ENCODE measurements at regions of chr3 and their contacts with region 1.

Region 1: GRCh38 chr3:62188681-62189383 is 184.5 kb downstream of the FEZF2 start:
- DNase-seq: peak; percentile 40
- H3K4me3 Mint-ChIP-seq: no peak overlapping the region
- H3K27ac Mint-ChIP-seq: no peak overlapping the region
- H3K4me1 Mint-ChIP-seq: peaks cover 8% of the 10 kb centered on the region
- H3K27me3 Mint-ChIP-seq: no peaks in the 10 kb centered on the region

Region 2: DNA sequence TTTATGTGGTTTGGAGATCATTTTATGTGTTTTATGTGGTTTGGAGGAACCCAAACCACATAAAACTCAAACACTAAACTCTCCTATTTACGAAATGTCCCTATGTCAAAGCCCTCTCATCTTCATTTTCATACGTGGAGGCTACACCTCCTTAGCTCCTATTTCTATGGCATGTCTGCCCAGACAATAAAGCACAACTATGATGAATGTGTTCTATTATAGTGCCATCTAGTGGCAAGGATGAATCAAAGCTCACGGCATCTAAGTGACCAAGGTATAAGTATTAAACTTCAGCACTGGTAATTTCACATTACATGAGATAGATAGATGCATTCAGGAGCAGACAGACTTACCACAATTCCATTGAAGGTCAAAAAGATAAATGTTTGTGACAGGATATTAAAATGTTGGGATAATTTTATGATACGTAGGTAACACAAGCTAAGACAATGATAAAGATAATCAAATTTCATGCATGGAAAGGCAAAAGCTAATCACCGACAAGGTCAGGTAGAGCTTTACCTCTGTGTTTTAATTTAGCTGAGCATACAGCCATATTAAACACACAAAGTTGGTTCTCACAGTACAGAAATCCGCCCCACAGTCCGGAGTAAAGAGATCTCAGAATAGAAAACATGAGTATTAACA is 807.0 kb before region 1 on chr3:
- intact Hi-C with region 1: loop called (anchors 10 kb)
- DNase-seq: no peak
- H3K4me3 Mint-ChIP-seq: no peak overlapping the region
- H3K27ac Mint-ChIP-seq: no peak overlapping the region
- H3K4me1 Mint-ChIP-seq: peaks cover 5% of the 10 kb centered on the region
- H3K27me3 Mint-ChIP-seq: peaks cover 4% of the 10 kb centered on the region

Region 3: DNA sequence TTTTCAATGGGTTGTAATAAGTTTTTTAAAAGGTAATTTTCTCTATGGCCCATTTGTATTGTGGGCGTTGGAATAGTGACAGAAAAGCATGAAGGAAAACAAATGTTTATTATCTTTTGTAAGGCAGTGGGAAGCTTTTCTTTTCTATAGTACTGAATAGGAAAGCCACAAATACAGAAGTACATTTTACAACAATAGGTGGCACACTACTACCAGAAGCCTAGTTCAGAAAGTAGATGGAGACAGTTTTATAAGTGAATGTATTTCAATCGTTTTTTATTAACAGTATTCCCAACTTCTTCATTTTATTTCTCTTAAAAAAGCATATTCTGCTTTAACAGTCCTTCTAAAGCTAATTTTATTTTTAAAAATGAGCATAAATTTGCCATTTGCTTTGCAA is 330.8 kb before region 1 on chr3:
- intact Hi-C with region 1: loop called (anchors 2 kb)
- DNase-seq: no peak
- H3K4me3 Mint-ChIP-seq: no peak overlapping the region
- H3K27ac Mint-ChIP-seq: no peak overlapping the region
- H3K4me1 Mint-ChIP-seq: no peaks in the 10 kb centered on the region
- H3K27me3 Mint-ChIP-seq: peaks cover 2% of the 10 kb centered on the region

Region 4: DNA sequence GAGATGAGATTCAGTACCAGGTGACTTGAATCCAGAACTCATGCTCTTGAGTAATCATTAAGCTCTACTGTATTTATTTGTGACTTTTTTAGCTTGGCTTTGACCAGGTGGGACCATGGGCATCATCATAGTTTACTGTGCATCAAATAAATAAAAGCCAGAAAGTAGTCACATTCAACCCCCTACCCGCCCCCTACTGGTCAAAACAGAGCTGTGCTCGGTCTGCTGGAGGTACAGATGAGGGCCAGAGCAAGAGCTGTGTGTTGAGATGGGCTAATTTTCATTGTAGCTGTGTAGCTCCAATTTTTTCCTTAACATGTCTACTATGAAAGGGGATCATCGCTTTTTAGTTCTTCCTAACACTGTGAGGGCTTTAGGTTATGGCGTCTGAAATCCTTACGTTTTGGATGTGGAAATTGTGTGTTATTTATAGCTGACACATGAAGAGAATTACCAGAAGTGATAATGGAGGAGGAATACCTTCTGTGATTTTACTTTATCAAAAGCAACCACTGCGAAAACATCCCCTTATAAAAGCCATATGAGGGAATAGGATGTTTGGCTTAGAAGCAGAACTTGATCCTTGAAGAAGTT is 252.4 kb before region 1 on chr3:
- intact Hi-C with region 1: loop called (anchors 5 kb)
- DNase-seq: no peak
- H3K4me3 Mint-ChIP-seq: no peak overlapping the region
- H3K27ac Mint-ChIP-seq: no peak overlapping the region
- H3K4me1 Mint-ChIP-seq: no peaks in the 10 kb centered on the region
- H3K27me3 Mint-ChIP-seq: no peaks in the 10 kb centered on the region

Region 5: DNA sequence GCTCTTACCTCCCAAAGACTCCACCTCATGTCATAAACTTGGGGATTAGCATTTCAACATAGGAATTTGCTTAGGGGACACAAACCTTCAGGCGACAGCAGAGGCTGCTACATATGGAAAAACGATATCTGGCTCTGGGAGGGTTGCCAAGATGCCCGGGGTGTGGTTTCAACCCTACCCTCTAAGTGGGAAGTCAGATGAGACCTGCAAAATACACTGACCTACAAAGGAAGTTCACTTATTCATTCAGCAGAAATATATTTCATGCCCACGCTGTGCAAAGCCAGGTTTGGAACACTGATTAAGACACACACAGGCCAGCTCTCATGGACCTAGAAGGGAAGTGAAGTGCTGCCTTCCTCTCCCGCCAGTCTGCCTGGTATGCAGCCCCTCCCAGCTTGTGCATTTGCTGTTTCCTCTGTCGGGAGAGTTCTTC is 54.8 kb before region 1 on chr3:
- intact Hi-C with region 1: no loop called
- DNase-seq: no peak
- H3K4me3 Mint-ChIP-seq: no peak overlapping the region
- H3K27ac Mint-ChIP-seq: no peak overlapping the region
- H3K4me1 Mint-ChIP-seq: no peaks in the 10 kb centered on the region
- H3K27me3 Mint-ChIP-seq: peaks cover 10% of the 10 kb centered on the region